B cell (primary cell): ENCODE measurements at regions of chr16 and their contacts with region 1.

Region 1: GRCh38 chr16:3158471-3159314 is 23.9 kb downstream of the ZNF213 start:
- DNase-seq: peak; percentile 92
- ATAC-seq: peak; percentile 91
- H3K4me3 ChIP-seq: peak overlapping the region; percentile 67 to 96 (median 84)
- H3K4me3 Mint-ChIP-seq: peak overlapping the region; percentile 93
- H3K27ac ChIP-seq: peak overlapping the region; percentile 43 to 60
- H3K27ac Mint-ChIP-seq: peak overlapping the region; percentile 95
- H3K4me1 ChIP-seq: peaks cover 17 to 27% of the 10 kb centered on the region in 2 donors
- H3K4me1 Mint-ChIP-seq: peaks cover 18% of the 10 kb centered on the region
- H3K27me3 ChIP-seq: peaks cover 0 to 6% (median 2%) of the 10 kb centered on the region in 4 experiments
- H3K27me3 Mint-ChIP-seq: peaks cover 2% of the 10 kb centered on the region
- CTCF ChIP-seq: no peak

Region 2: DNA sequence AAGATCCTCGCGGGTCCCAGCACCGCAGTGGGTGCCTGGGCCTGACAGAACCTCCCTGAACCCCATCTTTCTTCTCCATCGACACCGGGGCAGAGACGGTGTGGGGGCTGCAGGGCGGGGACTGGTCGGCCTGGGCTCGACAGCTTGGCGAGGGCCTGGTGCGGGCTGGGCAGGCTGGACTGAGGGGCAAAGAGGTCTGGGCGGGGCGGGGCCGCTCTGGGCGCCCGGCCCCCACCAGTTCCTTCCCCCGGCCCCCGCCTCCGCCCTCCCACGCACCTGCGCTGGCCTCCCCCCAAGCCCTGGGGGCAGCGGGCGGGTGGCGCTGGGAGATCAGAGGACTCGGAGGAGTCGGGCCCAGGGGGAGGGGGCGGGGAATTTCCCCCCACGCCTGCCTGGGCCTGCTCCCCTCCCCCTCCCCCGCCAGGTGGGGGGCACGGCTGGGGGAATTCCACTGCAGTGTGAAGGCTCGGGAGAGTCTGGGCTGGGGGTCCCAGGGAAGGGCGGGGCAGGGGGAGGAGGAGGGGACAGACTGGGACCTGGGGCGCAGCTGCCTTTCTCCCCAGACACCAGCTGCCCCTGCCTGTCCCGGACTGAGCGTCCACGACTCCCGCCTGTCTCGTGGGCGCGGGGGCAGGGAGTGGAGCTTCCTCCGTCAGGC is 195.5 kb before region 1 on chr16:
- CTCF ChIA-PET with region 1: no interaction called
- POLR2A ChIA-PET with region 1: no interaction called
- intact Hi-C with region 1: no loop called
- DNase-seq: peak; percentile 70
- ATAC-seq: peak; percentile 15
- H3K4me3 ChIP-seq: peak overlapping the region in 4 of 5 experiments; percentile 39 to 61 (median 54)
- H3K4me3 Mint-ChIP-seq: peak overlapping the region; percentile 84
- H3K27ac ChIP-seq: no peak overlapping the region
- H3K27ac Mint-ChIP-seq: peak overlapping the region; percentile 6
- H3K4me1 ChIP-seq: peaks cover 59% of the 10 kb centered on the region in 2 donors
- H3K4me1 Mint-ChIP-seq: peaks cover 30% of the 10 kb centered on the region
- H3K27me3 ChIP-seq: peaks cover 0 to 60% (median 17%) of the 10 kb centered on the region in 4 experiments
- H3K27me3 Mint-ChIP-seq: peaks cover 21% of the 10 kb centered on the region
- CTCF ChIP-seq: no peak

Region 3: GRCh38 chr16:3029537-3030402 is 128.9 kb before region 1 on chr16:
- CTCF ChIA-PET with region 1: interaction called, 10 read pairs
- POLR2A ChIA-PET with region 1: no interaction called
- intact Hi-C with region 1: loop called (anchors 5 kb)
- DNase-seq: peak; percentile 54
- ATAC-seq: no peak
- H3K4me3 ChIP-seq: no peak overlapping the region
- H3K4me3 Mint-ChIP-seq: peak overlapping the region; percentile 35
- H3K27ac ChIP-seq: no peak overlapping the region
- H3K27ac Mint-ChIP-seq: no peak overlapping the region
- H3K4me1 ChIP-seq: peaks cover 25 to 28% of the 10 kb centered on the region in 2 donors
- H3K4me1 Mint-ChIP-seq: peaks cover 20% of the 10 kb centered on the region
- H3K27me3 ChIP-seq: peaks cover 0 to 58% (median 28%) of the 10 kb centered on the region in 4 experiments
- H3K27me3 Mint-ChIP-seq: peaks cover 40% of the 10 kb centered on the region
- CTCF ChIP-seq: no peak

Region 4: DNA sequence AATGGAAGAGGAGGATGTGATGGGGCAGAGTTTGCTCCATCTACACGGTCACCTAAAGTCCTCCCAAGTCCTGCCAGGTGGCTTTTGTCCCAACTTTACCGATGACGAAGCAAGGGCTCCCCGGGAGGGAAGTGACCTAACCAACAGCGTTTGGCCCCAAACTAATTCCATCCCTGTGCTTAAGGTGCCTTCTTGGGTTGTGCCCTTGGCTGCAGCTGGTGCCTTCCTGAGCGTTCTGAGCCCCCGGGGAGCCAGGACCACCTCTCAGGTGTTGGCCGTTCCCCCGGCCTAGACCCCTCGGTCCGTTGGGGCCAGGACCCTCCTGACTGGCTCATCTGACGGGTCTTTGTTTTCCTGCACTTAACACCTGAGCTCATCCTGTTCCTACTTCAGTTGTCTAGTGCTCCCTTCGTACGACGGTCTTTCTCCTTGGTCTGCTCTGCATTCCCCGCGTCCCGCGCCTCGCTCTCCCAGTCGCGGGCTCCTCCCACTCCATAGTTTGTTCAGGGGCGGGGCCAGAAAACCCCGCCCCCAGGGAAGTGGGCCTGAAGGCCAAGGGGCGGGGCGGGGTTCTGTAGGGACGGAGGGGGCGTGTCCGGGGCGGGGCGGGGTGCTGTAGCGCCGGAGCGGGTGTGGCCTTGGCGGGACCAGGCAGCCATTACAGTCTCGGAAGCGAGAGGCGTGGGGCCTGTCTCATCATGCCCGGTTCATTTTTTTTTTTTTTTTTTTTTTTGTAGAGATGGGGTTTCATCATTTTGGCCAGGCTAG is 58.8 kb before region 1 on chr16:
- CTCF ChIA-PET with region 1: interaction called, 3 read pairs
- POLR2A ChIA-PET with region 1: interaction called, 4 read pairs
- intact Hi-C with region 1: loop called (anchors 2 kb)
- DNase-seq: peak; percentile 88
- ATAC-seq: peak; percentile 88
- H3K4me3 ChIP-seq: peak overlapping the region in 4 of 5 experiments; percentile 26 to 48 (median 36)
- H3K4me3 Mint-ChIP-seq: peak overlapping the region; percentile 83
- H3K27ac ChIP-seq: no peak overlapping the region
- H3K27ac Mint-ChIP-seq: peak overlapping the region; percentile 56
- H3K4me1 ChIP-seq: peaks cover 25 to 40% of the 10 kb centered on the region in 2 donors
- H3K4me1 Mint-ChIP-seq: peaks cover 32% of the 10 kb centered on the region
- H3K27me3 ChIP-seq: no peaks in the 10 kb centered on the region
- H3K27me3 Mint-ChIP-seq: no peaks in the 10 kb centered on the region
- CTCF ChIP-seq: no peak

Region 5: DNA sequence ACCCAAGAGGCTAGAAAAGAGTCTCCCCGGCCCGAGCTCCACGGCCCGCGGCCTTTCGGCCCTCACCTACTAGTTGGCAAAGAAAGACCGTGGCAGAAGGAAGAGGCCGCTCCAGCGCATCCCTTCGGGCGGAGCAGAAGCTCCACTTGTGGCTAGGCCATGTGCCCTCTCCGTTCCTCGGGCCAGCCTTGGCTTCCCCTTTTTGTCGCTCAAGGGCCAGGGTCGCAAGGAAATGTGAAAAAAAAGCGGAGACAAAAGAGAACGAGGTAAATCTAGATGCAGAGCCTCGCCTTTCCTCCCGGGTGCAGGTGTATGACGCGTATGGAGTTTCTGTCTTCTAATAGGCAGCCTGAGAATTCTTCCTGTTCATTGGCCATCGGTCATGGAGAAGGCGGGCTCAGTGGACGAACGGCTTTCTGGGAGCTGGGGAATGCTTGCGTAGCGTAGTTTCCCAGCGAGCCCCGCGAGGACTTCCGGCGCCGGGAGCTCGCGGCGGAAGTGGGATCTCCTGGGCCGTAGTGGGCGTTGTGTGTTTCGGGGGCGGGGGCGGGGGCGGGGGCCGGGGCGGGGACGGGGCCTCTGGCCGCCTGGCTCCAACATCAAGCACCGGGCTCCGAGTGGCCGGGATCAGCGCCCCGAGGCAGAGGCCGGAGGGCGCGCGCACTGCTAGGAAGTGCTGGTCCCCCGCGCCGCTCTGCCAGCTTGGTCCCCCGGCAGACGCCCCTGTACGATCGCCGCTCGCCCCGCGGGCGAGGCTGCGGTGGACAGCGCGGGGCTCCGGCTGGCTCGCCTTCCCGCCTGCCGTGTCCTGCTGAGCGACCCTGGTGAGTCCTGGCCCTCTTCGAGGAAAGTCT is 23.9 kb before region 1 on chr16 and contains the start of gene ZNF213:
- CTCF ChIA-PET with region 1: interaction called, 13 read pairs
- POLR2A ChIA-PET with region 1: interaction called, 13 read pairs
- intact Hi-C with region 1: no loop called
- DNase-seq: peak; percentile 97
- ATAC-seq: peak; percentile 98
- H3K4me3 ChIP-seq: peak within 1 kb of the TSS; percentile 70 to 99 (median 86)
- H3K4me3 Mint-ChIP-seq: peak within 1 kb of the TSS; percentile 98
- H3K27ac ChIP-seq: peak within 1 kb of the TSS; percentile 91 to 93
- H3K27ac Mint-ChIP-seq: peak within 1 kb of the TSS; percentile 97
- H3K4me1 ChIP-seq: peaks cover 15 to 20% of the 10 kb centered on the region in 2 donors
- H3K4me1 Mint-ChIP-seq: peaks cover 29% of the 10 kb centered on the region
- H3K27me3 ChIP-seq: no peaks in the 10 kb centered on the region
- H3K27me3 Mint-ChIP-seq: no peaks in the 10 kb centered on the region
- CTCF ChIP-seq: no peak
- total RNA-seq, gene ZNF213: 7.2 and 9.5 TPM in 2 replicates

Region 6: GRCh38 chr16:3520413-3520812 is 361.7 kb after region 1 on chr16:
- CTCF ChIA-PET with region 1: no interaction called
- POLR2A ChIA-PET with region 1: no interaction called
- intact Hi-C with region 1: no loop called
- DNase-seq: no peak
- ATAC-seq: no peak
- H3K4me3 ChIP-seq: no peak overlapping the region
- H3K4me3 Mint-ChIP-seq: no peak overlapping the region
- H3K27ac ChIP-seq: no peak overlapping the region
- H3K27ac Mint-ChIP-seq: no peak overlapping the region
- H3K4me1 ChIP-seq: no peaks in the 10 kb centered on the region
- H3K4me1 Mint-ChIP-seq: no peaks in the 10 kb centered on the region
- H3K27me3 ChIP-seq: no peaks in the 10 kb centered on the region
- H3K27me3 Mint-ChIP-seq: no peaks in the 10 kb centered on the region
- CTCF ChIP-seq: no peak